GM12878 (cell line): ENCODE measurements at regions of chr1 and their contacts with region 1.

Region 1: DNA sequence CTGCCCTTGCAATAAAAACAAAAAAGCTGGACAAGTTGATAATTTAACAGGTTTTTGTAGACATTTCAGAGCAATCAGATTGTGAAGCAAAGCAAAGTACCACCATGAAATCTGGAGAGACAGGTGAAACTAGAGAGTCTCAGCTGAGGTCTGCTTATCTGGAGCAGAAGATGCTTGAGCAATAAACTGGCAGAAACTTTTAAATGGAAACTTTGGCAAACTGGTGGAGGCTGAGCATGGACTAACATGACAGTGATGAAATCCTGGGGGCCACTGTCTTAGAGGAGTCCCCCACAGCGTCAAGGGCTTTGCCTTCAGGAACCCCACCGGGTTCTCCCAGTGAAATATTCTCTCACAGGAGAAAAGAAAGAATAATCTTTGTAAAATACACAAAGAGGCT is 416.3 kb upstream of the B3GALT2 start:
- DNase-seq: no peak
- ATAC-seq: no peak
- H3K4me3 ChIP-seq: no peak overlapping the region
- H3K27ac ChIP-seq: no peak overlapping the region
- H3K4me1 ChIP-seq: no peaks in the 10 kb centered on the region
- H3K27me3 ChIP-seq: no peaks in the 10 kb centered on the region
- CTCF ChIP-seq: no peak
- EP300 ChIP-seq: no peak
- POLR2A ChIP-seq: no peak
- RAD21 ChIP-seq: no peak

Region 2: GRCh38 chr1:193368302-193368701 is 234.4 kb before region 1 on chr1:
- CTCF ChIA-PET with region 1: no interaction called
- POLR2A ChIA-PET with region 1: no interaction called
- RAD21 ChIA-PET with region 1: no interaction called
- SMC1A ChIA-PET with region 1: no interaction called
- in situ Hi-C with region 1: no loop called
- intact Hi-C with region 1: no loop called
- DNase-seq: no peak
- ATAC-seq: peak; percentile 54
- H3K4me3 ChIP-seq: 0 out of 2 replicates have a peak overlapping the region, but pooled peaks have one; percentile 10
- H3K27ac ChIP-seq: no peak overlapping the region
- H3K4me1 ChIP-seq: no peaks in the 10 kb centered on the region
- H3K27me3 ChIP-seq: no peaks in the 10 kb centered on the region
- CTCF ChIP-seq: no peak
- EP300 ChIP-seq: no peak
- POLR2A ChIP-seq: no peak
- RAD21 ChIP-seq: no peak

Region 3: DNA sequence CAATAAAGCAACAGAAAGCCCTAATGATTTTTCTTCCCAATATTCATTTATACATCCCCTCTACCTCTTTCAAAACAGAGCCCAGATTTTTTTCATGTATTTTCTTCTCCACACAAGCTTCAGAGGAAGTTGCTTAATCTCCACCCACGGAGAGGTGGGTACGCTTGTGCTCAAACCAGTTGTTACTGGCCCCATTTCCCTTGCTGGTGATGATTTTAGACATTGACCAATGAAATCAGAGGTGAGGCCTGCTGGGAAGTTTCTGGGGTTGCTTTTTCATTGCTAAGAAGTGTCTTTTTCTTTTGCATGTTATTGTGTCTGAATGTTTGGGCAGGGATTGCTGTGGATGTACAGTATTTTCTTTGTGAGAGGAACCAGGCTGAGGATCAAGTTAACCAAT is 31.8 kb after region 1 on chr1:
- CTCF ChIA-PET with region 1: interaction called, 10 read pairs
- POLR2A ChIA-PET with region 1: no interaction called
- RAD21 ChIA-PET with region 1: no interaction called
- SMC1A ChIA-PET with region 1: no interaction called
- in situ Hi-C with region 1: no loop called
- intact Hi-C with region 1: no loop called
- DNase-seq: no peak
- ATAC-seq: no peak
- H3K4me3 ChIP-seq: no peak overlapping the region
- H3K27ac ChIP-seq: no peak overlapping the region
- H3K4me1 ChIP-seq: no peaks in the 10 kb centered on the region
- H3K27me3 ChIP-seq: no peaks in the 10 kb centered on the region
- CTCF ChIP-seq: no peak
- EP300 ChIP-seq: no peak
- POLR2A ChIP-seq: no peak
- RAD21 ChIP-seq: no peak

Region 4: DNA sequence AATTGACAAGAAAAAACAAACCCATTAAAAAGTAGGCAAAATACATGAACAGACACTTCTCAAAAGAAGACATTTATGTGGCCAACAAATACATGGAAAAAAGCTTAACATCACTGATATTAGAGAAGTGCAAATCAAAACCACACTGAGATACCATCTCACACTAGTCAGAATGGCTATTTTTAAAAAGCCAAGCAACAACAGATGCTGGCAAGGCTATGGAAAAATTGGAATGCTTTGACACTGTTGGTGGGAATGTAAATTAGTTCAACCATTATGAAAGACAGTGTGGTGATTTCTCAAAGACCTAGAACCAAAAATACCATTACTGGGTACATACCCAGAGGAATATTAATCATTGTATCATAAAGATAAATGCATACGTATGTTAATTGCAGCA is 224.8 kb after region 1 on chr1:
- CTCF ChIA-PET with region 1: no interaction called
- POLR2A ChIA-PET with region 1: no interaction called
- RAD21 ChIA-PET with region 1: no interaction called
- SMC1A ChIA-PET with region 1: no interaction called
- in situ Hi-C with region 1: no loop called
- intact Hi-C with region 1: no loop called
- DNase-seq: no peak
- ATAC-seq: no peak
- H3K4me3 ChIP-seq: no peak overlapping the region
- H3K27ac ChIP-seq: no peak overlapping the region
- H3K4me1 ChIP-seq: no peaks in the 10 kb centered on the region
- H3K27me3 ChIP-seq: no peaks in the 10 kb centered on the region
- CTCF ChIP-seq: no peak
- EP300 ChIP-seq: no peak
- POLR2A ChIP-seq: no peak
- RAD21 ChIP-seq: no peak

Region 5: GRCh38 chr1:193971595-193971994 is 368.9 kb after region 1 on chr1:
- CTCF ChIA-PET with region 1: no interaction called
- POLR2A ChIA-PET with region 1: no interaction called
- RAD21 ChIA-PET with region 1: no interaction called
- SMC1A ChIA-PET with region 1: no interaction called
- in situ Hi-C with region 1: no loop called
- intact Hi-C with region 1: no loop called
- DNase-seq: no peak
- ATAC-seq: no peak
- H3K4me3 ChIP-seq: no peak overlapping the region
- H3K27ac ChIP-seq: no peak overlapping the region
- H3K4me1 ChIP-seq: no peaks in the 10 kb centered on the region
- H3K27me3 ChIP-seq: no peaks in the 10 kb centered on the region
- CTCF ChIP-seq: no peak
- EP300 ChIP-seq: no peak
- POLR2A ChIP-seq: no peak
- RAD21 ChIP-seq: no peak

Region 6: DNA sequence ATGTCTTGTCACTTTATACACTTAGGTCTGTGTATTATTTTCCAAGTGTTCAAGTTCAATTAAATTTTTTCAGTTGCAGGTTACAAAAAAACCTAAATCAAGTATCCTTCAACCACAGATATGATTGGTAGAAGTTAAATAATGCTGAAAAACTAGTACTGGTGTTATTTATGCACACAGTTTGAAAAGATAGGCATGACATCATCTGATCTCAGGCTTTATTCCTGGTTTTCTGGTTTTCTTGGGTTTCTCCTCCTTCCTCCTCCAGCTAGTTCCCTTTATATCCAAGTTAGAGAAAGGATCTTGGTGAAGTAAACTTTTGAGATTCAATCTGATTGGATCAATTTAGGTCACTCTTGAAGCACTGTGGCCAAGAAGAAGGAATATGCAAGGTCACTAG is 784.8 kb after region 1 on chr1:
- CTCF ChIA-PET with region 1: no interaction called
- POLR2A ChIA-PET with region 1: no interaction called
- RAD21 ChIA-PET with region 1: no interaction called
- SMC1A ChIA-PET with region 1: no interaction called
- in situ Hi-C with region 1: no loop called
- intact Hi-C with region 1: no loop called
- DNase-seq: no peak
- ATAC-seq: no peak
- H3K4me3 ChIP-seq: no peak overlapping the region
- H3K27ac ChIP-seq: no peak overlapping the region
- H3K4me1 ChIP-seq: no peaks in the 10 kb centered on the region
- H3K27me3 ChIP-seq: no peaks in the 10 kb centered on the region
- CTCF ChIP-seq: no peak
- EP300 ChIP-seq: no peak
- POLR2A ChIP-seq: no peak
- RAD21 ChIP-seq: no peak